Transverse colon (tissue), 4 donors: ENCODE measurements at regions of chr6 and their contacts with region 1.

Region 1: DNA sequence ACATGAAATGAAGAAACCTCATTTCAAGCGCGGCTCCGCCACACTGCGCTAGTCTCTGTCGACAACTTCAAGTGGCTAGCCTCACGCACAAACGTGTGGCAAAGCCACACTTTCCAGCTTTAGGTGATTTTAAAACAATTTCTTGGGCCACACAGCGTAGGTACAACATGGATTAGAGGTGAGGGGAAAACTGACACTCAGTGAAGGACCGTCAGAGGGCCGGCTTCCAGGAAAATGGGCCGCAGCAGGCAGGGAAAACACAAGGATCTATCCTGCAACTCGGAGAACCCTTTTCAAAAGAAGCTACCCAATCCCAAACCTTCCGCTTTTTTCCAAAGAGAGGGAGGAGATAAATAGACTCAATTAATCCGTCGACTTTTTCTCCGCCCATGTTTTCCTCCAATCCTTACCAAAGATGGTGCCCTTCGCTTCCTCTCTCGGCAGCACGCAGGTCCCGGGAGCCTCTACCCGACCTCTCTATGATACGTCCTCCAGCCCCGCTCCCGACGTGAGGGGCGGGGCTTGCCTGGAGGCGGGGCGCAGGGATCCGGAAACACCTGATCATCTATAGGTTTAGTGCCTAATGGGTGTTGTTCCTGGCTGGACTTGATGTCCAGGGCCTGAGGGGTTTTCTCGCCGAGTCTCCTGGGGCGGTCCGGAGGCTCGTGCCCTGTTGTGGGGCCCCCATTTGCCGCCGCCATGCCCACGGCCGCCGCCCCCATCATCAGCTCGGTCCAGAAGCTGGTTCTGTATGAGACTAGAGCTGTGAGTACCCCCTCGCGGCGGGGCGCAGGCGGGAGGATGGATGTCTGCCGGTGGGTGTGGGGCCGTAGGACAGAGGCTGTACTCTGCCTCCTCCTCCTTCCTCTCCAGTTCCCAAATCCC is at the starts of genes AK9 and FIG4:
- DNase-seq: peak; percentile 97
- H3K4me3 ChIP-seq: peak within 1 kb of the TSS; percentile 38 to 78 (median 69)
- H3K27ac ChIP-seq: peak within 1 kb of the TSS; percentile 86 to 96 (median 92)
- H3K4me1 ChIP-seq: peaks cover 0 to 26% (median 21%) of the 10 kb centered on the region in 4 donors
- H3K27me3 ChIP-seq: no peaks in the 10 kb centered on the region
- CTCF ChIP-seq: peak in 2 of 5 experiments; percentile 16 to 18
- EP300 ChIP-seq: no peak
- POLR2A ChIP-seq: peak; percentile 82
- total RNA-seq, gene AK9: 12.0 to 32.0 (median 23.2) TPM
- total RNA-seq, gene FIG4: 3.7 to 21.6 (median 15.2) TPM

Region 2: DNA sequence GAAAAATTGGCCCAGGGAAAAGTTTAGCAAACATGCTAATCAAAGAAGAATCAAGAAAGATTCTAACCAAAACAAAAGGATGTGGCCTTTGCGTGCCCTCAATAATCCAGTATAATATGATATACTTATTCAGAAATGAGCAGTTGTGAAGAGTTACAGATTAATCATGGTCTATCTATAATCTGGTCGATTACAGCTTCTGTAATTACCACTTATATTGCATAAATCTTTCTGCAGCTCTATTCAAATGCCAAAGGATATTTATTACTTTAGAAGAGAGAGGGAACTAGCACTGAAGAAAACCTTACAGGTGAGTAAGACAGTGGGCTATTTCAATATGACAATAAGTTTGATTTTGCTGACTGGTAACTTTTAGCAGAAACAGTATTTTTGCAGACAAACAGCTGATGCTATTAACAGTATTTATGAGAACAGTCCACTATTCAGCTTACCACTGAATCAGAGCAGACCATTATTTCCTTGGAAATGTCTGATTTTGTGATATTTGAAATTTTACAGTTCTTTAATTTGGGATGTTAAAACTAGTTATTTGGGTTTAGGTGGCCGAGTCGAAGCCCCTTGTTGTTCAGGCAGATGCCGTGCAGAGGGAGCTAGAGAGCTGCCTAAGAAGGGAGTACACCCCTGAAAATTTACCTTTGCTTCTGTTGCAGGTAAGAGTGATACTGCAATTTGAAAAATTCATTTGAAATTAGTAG is 503.4 kb before region 1 on chr6:
- in situ Hi-C with region 1: loop called in 2 of 4 experiments (anchors 25 kb)
- intact Hi-C with region 1: no loop called
- DNase-seq: peak; percentile 72
- H3K4me3 ChIP-seq: no peak overlapping the region
- H3K27ac ChIP-seq: no peak overlapping the region
- H3K4me1 ChIP-seq: peaks cover 0 to 14% (median 1%) of the 10 kb centered on the region in 4 donors
- H3K27me3 ChIP-seq: no peaks in the 10 kb centered on the region
- CTCF ChIP-seq: peak; percentile 88 to 94 (median 92)
- EP300 ChIP-seq: no peak
- POLR2A ChIP-seq: no peak

Region 3: DNA sequence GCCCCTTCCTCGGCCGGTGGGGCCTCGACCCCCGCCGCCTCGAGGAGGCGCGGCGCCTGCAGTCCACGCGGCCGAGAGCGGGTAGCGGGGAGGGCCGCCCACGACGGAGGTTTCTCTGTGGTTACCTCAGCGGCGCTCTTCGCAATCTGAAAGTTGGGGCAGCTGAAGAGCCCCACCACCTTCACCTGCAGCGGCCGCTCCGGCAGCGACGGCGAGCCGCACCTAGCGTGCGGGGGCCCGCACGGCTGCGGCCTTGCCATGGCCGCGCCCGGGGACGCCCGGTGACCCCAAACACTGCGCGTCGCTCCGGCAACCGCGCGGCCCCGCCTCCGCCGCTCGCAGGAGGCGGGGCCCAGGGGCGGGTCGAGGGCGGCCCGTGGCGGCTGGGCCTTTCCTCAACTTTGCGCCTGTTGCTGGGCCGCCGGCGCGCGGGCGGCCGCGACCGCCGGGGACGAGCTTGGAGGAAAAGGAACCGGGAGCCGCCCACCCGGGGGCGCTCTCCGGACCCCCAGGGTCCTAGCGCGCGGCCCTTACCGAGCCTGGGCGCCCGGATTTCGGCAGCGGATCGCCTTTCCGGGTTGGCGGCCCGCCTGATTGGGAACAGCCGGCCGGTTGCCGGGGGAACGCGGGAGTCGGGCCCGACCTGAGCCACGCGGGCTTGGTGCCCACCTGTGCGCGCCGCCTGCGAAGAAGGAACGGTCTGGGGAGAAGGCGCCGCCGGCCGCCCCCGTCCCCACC is 250.5 kb before region 1 on chr6 and contains the starts of genes PPIL6 and SMPD2:
- in situ Hi-C with region 1: loop called in 1 of 4 experiments (anchors 25 kb)
- intact Hi-C with region 1: no loop called
- DNase-seq: peak; percentile 90
- H3K4me3 ChIP-seq: peak within 1 kb of the TSS; percentile 77 to 96 (median 84)
- H3K27ac ChIP-seq: peak within 1 kb of the TSS; percentile 90 to 92 (median 90)
- H3K4me1 ChIP-seq: peaks cover 0 to 24% (median 9%) of the 10 kb centered on the region in 4 donors
- H3K27me3 ChIP-seq: no peaks in the 10 kb centered on the region
- CTCF ChIP-seq: peak in 1 of 5 experiments; percentile 31
- EP300 ChIP-seq: peak; percentile 21
- POLR2A ChIP-seq: peak; percentile 57
- total RNA-seq, gene PPIL6: 0.64 to 4.0 (median 1.9) TPM in 3 of 4 donors, not detected in the other
- total RNA-seq, gene SMPD2: 9.4 to 34.5 (median 30.3) TPM

Region 4: DNA sequence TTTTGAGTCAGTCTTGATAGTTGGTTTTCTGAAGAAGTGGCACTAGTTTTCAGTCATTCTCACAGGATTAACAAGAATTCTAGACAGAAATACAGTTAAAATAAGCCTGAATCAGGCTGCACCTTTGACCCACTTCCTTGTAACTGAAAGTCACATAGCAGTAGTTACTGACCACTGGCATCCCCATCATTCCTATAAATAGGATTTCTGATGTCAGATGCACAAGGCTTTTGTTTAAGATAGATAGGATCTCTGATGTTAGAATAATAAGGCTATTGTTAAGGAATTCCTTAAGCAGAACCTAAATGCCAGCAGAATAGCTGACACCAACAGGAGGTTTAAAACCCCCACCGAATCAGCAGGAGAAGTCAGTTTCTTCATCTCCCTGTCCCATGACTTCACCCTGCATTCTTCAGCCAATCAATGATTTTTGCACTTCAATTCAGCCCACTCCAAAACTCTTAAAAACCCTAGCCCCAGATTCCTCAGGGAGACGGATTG is 177.4 kb before region 1 on chr6:
- in situ Hi-C with region 1: loop called in 1 of 4 experiments (anchors 25 kb)
- intact Hi-C with region 1: no loop called
- DNase-seq: no peak
- H3K4me3 ChIP-seq: no peak overlapping the region
- H3K27ac ChIP-seq: no peak overlapping the region
- H3K4me1 ChIP-seq: no peaks in the 10 kb centered on the region
- H3K27me3 ChIP-seq: no peaks in the 10 kb centered on the region
- CTCF ChIP-seq: no peak
- EP300 ChIP-seq: no peak
- POLR2A ChIP-seq: no peak

Region 5: DNA sequence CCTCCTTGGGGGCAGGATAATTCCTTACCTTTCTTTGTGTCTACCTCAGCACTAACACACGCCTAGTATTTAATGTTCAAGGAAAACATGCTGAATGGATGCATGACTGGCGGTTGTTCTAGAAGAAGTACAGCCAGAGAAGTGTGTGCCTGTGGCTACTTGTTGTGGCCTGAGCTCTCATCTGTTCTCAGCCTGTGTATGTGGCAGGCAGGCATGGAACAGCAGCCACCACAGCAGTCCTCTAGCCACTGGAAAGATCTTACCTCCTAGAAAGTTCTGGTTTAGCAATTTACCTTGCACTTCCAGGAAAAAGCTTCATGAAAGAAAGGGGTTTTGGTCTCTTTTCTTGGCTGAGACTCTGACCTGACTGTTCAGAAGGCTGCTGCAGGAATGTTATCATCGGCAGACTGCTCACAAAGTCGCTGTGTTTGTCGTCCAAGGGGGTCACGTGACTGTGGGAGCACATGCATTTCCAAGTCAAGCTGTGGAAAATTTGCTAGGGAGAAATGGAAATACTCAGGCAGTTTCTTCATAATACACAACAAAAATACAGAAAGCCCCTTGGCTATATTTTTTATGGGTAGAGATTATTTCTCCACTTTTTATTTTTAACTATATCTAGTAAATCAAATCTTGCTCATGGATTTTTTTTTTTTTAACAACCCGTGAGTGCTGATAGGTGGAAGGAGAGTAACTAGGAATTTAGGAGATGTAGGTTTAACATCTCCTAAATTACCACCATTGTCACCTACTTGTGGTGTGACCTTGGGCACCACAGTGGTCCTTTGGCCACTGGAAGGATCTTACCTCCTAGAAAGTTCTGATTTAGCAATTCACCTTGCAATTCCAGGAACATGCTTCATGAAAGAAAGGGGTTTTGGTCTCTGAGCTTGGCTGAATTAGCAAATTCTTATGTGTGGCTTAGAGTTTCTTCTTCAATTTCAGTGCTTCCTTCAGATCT is 176.3 kb after region 1 on chr6:
- in situ Hi-C with region 1: no loop called
- intact Hi-C with region 1: no loop called
- DNase-seq: no peak
- H3K4me3 ChIP-seq: no peak overlapping the region
- H3K27ac ChIP-seq: no peak overlapping the region
- H3K4me1 ChIP-seq: no peaks in the 10 kb centered on the region
- H3K27me3 ChIP-seq: no peaks in the 10 kb centered on the region
- CTCF ChIP-seq: no peak
- EP300 ChIP-seq: no peak
- POLR2A ChIP-seq: no peak

Region 6: DNA sequence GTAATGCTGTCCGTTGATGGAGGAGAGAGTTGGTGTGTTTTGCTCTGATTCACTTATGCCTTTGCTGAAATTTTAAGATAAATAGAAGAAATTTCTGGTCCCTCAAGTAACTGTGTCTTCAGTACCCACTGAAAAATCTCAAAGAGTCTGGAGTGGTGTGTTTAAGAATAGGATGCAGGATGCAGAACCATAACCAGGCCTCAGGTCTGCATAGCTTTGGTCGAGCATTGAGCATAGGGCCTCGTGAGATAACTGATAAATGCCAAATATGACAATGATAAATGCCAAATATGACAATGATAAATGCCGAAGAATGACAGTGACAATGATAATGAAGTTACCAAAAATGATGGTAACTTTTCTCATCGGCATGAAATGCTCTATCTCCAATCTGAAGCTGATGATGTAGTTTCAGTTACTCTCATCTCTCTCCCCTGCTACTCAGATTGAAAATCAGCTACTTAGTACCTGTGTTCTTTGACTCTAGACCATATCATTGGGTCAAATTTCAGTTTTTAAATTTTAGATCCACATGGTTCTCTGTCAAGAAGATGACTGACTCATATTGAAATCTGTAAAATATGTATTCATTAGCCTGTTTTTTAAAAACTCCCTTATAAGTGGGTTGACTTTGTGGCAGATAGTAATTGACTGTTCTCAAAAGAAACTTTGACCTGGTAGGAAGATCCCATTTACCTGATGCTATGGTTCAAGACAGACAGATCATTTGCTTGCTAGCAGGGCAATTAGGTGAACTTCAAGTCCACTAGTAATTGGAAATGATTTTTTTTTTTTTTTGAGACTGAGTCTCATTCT is 1492.9 kb after region 1 on chr6:
- in situ Hi-C with region 1: no loop called
- intact Hi-C with region 1: no loop called
- DNase-seq: no peak
- H3K4me3 ChIP-seq: no peak overlapping the region
- H3K27ac ChIP-seq: no peak overlapping the region
- H3K4me1 ChIP-seq: no peaks in the 10 kb centered on the region
- H3K27me3 ChIP-seq: no peaks in the 10 kb centered on the region
- CTCF ChIP-seq: no peak
- EP300 ChIP-seq: no peak
- POLR2A ChIP-seq: no peak